CD14-positive monocyte (primary cell): ENCODE measurements at regions of chr1 and their contacts with region 1.

Region 1: DNA sequence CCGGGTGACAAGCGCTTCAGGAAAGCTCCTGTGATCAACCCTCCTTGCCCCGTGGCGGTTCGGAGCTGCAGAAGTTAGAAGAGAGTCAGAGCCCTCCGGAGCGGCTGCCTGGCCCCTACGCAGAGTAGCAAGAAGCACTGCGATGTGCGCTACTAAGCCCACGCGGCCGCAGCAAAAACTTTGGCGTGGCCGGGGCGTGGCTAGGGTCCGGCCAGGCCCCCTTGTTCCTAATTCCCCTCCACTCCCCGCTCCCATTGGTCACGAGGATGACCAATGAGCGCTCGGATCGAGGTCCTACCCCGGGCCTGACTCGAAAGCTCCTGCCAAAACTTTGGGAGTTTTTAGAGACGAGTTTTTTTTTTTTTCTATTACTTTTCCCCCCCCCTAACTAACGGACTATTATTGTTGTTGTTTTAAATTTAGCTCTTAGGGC is at the start of gene HLX:
- DNase-seq: peak; percentile 85 to 87 (median 86)
- H3K4me3 ChIP-seq: peak within 1 kb of the TSS; percentile 72 to 92 (median 81)
- H3K4me3 Mint-ChIP-seq: peak within 1 kb of the TSS; percentile 99
- H3K27ac ChIP-seq: peak within 1 kb of the TSS; percentile 84 to 91
- H3K27ac Mint-ChIP-seq: peak within 1 kb of the TSS; percentile 93 to 99 (median 97)
- H3K4me1 ChIP-seq: peaks cover 62% of the 10 kb centered on the region in 2 donors
- H3K4me1 Mint-ChIP-seq: peaks cover 69% of the 10 kb centered on the region
- H3K27me3 ChIP-seq: no peaks in the 10 kb centered on the region
- H3K27me3 Mint-ChIP-seq: peaks cover 0 to 9% (median 2%) of the 10 kb centered on the region in 3 donors
- CTCF ChIP-seq: no peak
- polyA plus RNA-seq, gene HLX: 17.1 to 44.0 (median 17.6) TPM

Region 2: DNA sequence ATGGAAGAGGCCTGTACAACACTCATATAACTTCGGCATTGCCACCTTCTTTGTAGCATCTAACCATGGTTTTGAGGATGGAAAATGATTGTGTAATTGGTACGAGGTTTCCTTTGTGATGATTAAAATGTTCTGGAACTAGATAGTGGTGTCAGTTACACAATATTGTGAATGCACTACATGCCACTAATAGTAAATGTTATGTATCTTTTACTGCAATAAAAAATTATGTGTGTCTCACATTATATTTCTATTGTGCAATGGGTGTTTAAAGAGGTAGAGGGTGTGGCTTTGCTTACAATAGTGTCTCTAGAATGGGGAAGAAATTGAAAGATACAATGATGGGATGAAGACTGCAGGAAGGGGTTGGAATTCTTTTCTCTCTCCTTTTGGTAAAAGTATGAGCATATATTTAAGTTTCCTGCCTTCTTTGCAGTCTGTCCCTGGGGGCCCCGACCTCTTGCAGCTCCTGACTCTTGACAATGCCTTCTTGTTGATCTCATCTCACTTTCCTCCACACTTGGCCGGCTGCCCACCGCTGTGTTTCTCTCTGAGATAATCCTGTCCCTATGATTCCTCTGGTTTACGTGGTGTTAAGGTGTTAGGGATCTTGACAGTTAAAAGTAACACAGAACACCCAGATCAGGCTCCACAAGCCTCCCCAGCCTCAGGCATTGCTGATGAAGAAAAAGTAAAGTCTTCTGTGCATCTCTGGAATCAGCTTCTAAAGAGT is 53.1 kb before region 1 on chr1:
- intact Hi-C with region 1: no loop called
- DNase-seq: no peak
- H3K4me3 ChIP-seq: no peak overlapping the region
- H3K4me3 Mint-ChIP-seq: no peak overlapping the region
- H3K27ac ChIP-seq: no peak overlapping the region
- H3K27ac Mint-ChIP-seq: no peak overlapping the region
- H3K4me1 ChIP-seq: no peaks in the 10 kb centered on the region
- H3K4me1 Mint-ChIP-seq: peaks cover 6% of the 10 kb centered on the region
- H3K27me3 ChIP-seq: no peaks in the 10 kb centered on the region
- H3K27me3 Mint-ChIP-seq: peaks cover 0 to 2% (median 2%) of the 10 kb centered on the region in 3 donors
- CTCF ChIP-seq: no peak

Region 3: DNA sequence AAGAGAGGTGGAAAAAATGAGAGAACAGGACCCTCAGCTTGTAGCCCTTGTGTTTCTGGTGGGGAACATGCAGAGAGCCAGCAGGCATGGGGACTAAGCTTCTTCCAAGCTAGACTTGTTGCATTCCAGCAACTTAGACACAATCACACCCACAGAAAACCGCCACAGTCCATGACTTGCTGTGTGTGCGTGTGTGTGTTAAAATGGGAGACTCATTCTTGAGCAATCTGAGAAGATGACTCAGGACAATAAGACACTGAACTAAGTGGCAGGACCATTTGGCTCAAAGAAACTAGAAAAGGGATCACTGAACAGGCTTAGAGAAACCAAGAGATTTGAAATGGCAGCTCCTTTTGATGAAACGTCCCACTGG is 78.1 kb after region 1 on chr1:
- intact Hi-C with region 1: loop called (anchors 5 to 10 kb)
- DNase-seq: peak; percentile 78 to 93 (median 88)
- H3K4me3 ChIP-seq: no peak overlapping the region
- H3K4me3 Mint-ChIP-seq: peak overlapping the region in 1 of 2 donors; percentile 62
- H3K27ac ChIP-seq: no peak overlapping the region
- H3K27ac Mint-ChIP-seq: peak overlapping the region in 4 of 7 donors; percentile 6 to 76 (median 73)
- H3K4me1 ChIP-seq: peaks cover 16 to 22% of the 10 kb centered on the region in 2 donors
- H3K4me1 Mint-ChIP-seq: peaks cover 22% of the 10 kb centered on the region
- H3K27me3 ChIP-seq: no peaks in the 10 kb centered on the region
- H3K27me3 Mint-ChIP-seq: peaks cover 0 to 2% (median 0%) of the 10 kb centered on the region in 3 donors
- CTCF ChIP-seq: no peak

Region 4: GRCh38 chr1:221166559-221167318 is 287.6 kb after region 1 on chr1:
- intact Hi-C with region 1: loop called (anchors 5 to 10 kb)
- DNase-seq: peak; percentile 88 to 96 (median 91)
- H3K4me3 ChIP-seq: peak overlapping the region in 2 of 3 experiments; percentile 27 to 58
- H3K4me3 Mint-ChIP-seq: peak overlapping the region; percentile 35 to 83
- H3K27ac ChIP-seq: peak overlapping the region in 1 of 2 donors; percentile 76
- H3K27ac Mint-ChIP-seq: peak overlapping the region; percentile 76 to 97 (median 92)
- H3K4me1 ChIP-seq: peaks cover 56 to 80% of the 10 kb centered on the region in 2 donors
- H3K4me1 Mint-ChIP-seq: peaks cover 65% of the 10 kb centered on the region
- H3K27me3 ChIP-seq: peaks cover 0 to 6% of the 10 kb centered on the region in 2 donors
- H3K27me3 Mint-ChIP-seq: peaks cover 6 to 9% (median 6%) of the 10 kb centered on the region in 3 donors
- CTCF ChIP-seq: no peak

Region 5: GRCh38 chr1:221435504-221435904 is 556.4 kb after region 1 on chr1:
- intact Hi-C with region 1: loop called (anchors 5 to 10 kb)
- DNase-seq: peak; percentile 22 to 60 (median 51)
- H3K4me3 ChIP-seq: no peak overlapping the region
- H3K4me3 Mint-ChIP-seq: no peak overlapping the region
- H3K27ac ChIP-seq: no peak overlapping the region
- H3K27ac Mint-ChIP-seq: no peak overlapping the region
- H3K4me1 ChIP-seq: peaks cover 5 to 7% of the 10 kb centered on the region in 2 donors
- H3K4me1 Mint-ChIP-seq: peaks cover 15% of the 10 kb centered on the region
- H3K27me3 ChIP-seq: no peaks in the 10 kb centered on the region
- H3K27me3 Mint-ChIP-seq: peaks cover 0 to 2% (median 1%) of the 10 kb centered on the region in 3 donors
- CTCF ChIP-seq: peak; percentile 98